ENCODE measurements at regions of chr10 and their contacts with region 1.

Region 1: GRCh38 chr10:25875556-25876165 is 58.4 kb upstream of the MYO3A start:
- DNase-seq: peak in 1 of 2 donors; percentile 74
- H3K4me3 ChIP-seq: no peak overlapping the region
- H3K27ac ChIP-seq: no peak overlapping the region
- H3K4me1 ChIP-seq: no peaks in the 10 kb centered on the region
- H3K27me3 ChIP-seq: no peaks in the 10 kb centered on the region
- CTCF ChIP-seq: peak; percentile 24 to 86 (median 70)

Region 2: DNA sequence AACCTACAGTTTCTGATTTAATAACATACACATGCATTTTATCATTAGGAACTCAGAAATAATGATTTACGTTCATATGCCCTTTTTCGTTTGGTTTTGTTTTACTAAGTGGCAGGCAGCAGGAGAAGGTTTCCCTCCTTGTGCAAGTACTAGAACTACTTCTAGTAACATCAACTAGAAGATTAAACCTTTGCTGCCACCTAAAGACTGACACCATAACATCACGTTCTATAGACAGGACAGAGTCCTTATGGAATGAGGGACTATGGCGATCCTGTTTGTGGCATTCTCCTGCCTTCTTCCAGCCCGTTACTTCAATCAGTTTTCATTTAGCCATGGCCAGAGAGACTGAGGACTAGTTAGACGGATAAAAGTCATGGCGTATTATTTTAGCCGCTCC is 394.1 kb after region 1 on chr10:
- intact Hi-C with region 1: loop called (anchors 2 kb)
- DNase-seq: no peak
- H3K4me3 ChIP-seq: no peak overlapping the region
- H3K27ac ChIP-seq: no peak overlapping the region
- H3K4me1 ChIP-seq: no peaks in the 10 kb centered on the region
- H3K27me3 ChIP-seq: no peaks in the 10 kb centered on the region
- CTCF ChIP-seq: peak in 1 of 3 experiments; percentile 22

Region 3: DNA sequence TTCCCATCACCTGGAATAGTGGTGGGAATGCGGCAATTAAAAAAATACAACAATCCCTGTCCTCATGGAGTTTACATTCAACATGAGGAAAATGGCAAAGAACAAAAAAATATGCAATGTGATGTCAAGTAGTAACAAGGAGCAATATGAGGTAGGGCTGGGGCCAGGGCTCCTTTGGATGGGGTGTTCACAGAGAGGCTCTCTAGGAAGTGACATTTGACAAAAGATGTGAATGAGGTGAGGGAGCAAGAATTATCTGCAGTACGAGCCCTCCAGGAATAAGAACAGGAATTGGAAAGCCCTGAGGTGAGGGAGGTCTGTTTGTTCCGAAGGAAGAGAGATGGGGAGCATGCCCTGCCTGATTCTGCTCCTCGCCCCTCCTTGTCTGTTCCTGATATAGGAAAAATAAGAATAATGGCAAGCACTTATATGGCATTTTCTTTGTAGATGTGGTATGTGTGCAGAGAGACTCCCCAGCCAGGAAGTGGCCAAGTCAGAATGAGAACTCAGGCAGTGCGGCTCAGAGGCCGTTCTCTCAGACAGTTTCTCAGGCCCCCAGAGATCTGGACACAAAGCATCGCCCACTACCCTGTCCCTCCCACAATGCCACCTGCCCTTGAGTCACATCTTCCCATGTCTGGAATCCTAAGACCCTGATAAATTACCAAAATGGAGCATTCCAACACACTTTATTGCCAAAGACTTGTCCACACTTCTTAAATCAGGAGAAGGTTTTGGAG is 668.1 kb after region 1 on chr10:
- intact Hi-C with region 1: no loop called
- DNase-seq: no peak
- H3K4me3 ChIP-seq: no peak overlapping the region
- H3K27ac ChIP-seq: no peak overlapping the region
- H3K4me1 ChIP-seq: no peaks in the 10 kb centered on the region
- H3K27me3 ChIP-seq: no peaks in the 10 kb centered on the region
- CTCF ChIP-seq: no peak